ENCODE measurements at regions of chr14 and their contacts with region 1.

Region 1: GRCh38 chr14:36361210-36361853 is 40.9 kb upstream of the MBIP start:
- DNase-seq: no peak
- H3K4me3 ChIP-seq: no peak overlapping the region
- H3K27ac ChIP-seq: no peak overlapping the region
- H3K4me1 ChIP-seq: no peaks in the 10 kb centered on the region
- H3K27me3 ChIP-seq: peaks cover 3 to 6% of the 10 kb centered on the region in 2 experiments
- CTCF ChIP-seq: no peak
- POLR2A ChIP-seq: no peak

Region 2: DNA sequence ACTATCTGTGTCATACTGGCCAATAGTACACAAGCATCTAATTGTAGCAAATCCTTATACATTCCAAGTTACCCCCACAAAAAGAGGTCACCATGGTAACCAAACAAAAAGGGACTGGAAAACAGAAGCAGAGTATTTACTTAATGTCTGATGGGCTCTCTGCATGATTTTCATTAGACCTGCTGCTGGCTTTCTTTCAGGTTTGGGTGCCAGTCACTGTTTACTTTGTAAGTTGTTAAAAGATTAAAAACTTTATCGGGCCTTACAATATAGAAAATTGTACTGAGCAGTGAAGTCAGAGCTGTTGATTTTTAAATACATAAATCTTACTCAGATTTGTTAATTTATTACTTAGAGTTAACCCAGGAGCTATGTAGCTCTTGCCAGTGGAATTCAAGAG is 411.3 kb before region 1 on chr14:
- CTCF ChIA-PET with region 1: no interaction called
- POLR2A ChIA-PET with region 1: no interaction called
- dilution Hi-C with region 1: no loop called
- intact Hi-C with region 1: loop called (anchors 10 kb)
- DNase-seq: no peak
- H3K4me3 ChIP-seq: no peak overlapping the region
- H3K27ac ChIP-seq: no peak overlapping the region
- H3K4me1 ChIP-seq: no peaks in the 10 kb centered on the region
- H3K27me3 ChIP-seq: peaks cover 0 to 1% of the 10 kb centered on the region in 2 experiments
- CTCF ChIP-seq: no peak
- POLR2A ChIP-seq: no peak

Measured in endothelial cell of umbilical vein (primary cell).